Head of caudate nucleus (tissue), 42 donors: ENCODE measurements at regions of chr10 and their contacts with region 1.

Region 1: GRCh38 chr10:110269374-110270318 is 35.1 kb downstream of the SMNDC1 start:
- DNase-seq: peak in 30 of 42 donors; percentile 9 to 82 (median 54)

Region 2: DNA sequence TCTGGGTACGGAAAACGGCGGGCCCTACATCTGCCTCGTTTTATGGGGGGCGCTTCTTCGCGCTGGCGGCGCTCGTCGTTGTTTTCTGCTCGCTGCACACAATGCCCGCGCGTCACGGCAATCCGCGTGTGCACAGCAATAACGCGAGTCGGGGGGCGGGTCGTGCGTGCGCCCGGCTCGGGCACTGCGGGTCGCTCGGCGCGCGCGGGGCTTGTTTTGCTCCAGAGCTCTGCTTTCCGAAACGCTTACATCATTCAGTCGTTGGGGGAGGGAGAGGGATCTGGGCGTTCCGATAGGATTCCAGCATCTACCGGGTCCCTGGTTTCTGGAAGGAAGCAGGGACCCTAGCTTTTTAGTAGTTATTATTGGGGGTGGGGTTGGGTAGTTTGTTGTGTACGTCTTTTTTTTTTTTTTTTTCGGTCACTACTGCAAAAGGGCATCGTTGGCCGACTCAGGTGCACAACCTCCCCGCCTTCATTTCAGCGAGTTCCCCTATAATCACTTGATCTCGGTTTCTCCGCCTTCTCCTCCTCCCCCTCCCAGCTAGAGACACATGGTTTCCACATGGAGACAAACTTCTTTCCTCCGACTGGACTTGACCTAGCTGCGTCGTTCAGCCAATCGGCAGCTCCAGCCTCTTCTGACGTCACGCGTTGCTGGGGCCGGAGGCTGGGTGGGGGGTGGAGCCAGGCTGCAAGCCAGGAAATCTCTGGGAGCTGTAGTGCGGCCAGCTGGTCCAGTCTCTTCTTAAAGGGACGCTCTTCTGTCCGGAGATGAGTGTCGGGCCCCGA is 58.8 kb before region 1 on chr10:
- intact Hi-C with region 1: loop called (anchors 5 kb)
- DNase-seq: peak; percentile 96 to 100 (median 99)

Region 3: GRCh38 chr10:110241407-110241806 is 28.2 kb before region 1 on chr10:
- intact Hi-C with region 1: no loop called
- DNase-seq: no peak